ENCODE measurements at regions of chr5 and their contacts with region 1.

Region 1: DNA sequence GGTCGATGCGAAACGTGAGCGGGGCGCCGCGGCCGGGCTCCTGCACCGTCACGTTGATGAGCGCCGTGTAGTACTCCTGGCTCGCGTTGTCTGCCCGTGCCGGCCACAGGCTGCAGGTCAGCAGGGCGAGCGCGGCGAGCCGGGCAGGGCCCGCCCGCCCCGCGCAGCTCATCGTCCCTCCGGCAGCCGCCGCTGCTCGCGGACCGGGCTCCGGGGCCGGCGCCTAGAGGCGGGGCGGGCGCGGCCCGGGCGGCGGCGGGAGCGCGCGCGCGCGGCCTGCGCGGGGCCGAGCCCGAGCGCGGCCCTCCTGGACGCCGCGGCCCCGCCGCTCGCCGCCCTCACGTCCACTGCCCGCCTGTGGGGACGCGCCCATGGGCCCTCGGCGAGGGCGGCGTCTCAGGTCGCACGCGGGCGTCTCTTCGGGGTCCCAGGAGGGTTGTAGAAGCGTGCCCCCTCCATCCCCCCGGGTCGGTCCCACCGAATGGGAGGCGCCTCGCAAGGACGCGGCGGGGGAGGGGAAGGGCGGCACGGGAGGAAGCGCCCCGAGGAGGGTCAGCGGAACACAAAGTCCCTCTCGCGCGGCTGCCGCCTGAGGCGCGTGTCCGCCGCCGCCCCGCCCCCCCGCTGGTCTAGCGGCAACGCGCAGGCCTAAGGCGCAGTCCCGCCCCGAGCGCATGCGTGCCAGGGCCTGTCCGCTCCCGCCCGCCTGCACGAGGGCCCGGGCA is at the start of gene RNF130:
- DNase-seq: peak; percentile 91
- ATAC-seq: peak; percentile 83
- H3K4me3 Mint-ChIP-seq: peak within 1 kb of the TSS; percentile 89
- H3K27ac Mint-ChIP-seq: peak within 1 kb of the TSS; percentile 84
- H3K4me1 Mint-ChIP-seq: peaks cover 28% of the 10 kb centered on the region
- H3K27me3 Mint-ChIP-seq: peaks cover 2% of the 10 kb centered on the region
- CTCF ChIP-seq: no peak
- total RNA-seq, gene RNF130: 17.6 and 18.5 TPM in 2 replicates

Region 2: DNA sequence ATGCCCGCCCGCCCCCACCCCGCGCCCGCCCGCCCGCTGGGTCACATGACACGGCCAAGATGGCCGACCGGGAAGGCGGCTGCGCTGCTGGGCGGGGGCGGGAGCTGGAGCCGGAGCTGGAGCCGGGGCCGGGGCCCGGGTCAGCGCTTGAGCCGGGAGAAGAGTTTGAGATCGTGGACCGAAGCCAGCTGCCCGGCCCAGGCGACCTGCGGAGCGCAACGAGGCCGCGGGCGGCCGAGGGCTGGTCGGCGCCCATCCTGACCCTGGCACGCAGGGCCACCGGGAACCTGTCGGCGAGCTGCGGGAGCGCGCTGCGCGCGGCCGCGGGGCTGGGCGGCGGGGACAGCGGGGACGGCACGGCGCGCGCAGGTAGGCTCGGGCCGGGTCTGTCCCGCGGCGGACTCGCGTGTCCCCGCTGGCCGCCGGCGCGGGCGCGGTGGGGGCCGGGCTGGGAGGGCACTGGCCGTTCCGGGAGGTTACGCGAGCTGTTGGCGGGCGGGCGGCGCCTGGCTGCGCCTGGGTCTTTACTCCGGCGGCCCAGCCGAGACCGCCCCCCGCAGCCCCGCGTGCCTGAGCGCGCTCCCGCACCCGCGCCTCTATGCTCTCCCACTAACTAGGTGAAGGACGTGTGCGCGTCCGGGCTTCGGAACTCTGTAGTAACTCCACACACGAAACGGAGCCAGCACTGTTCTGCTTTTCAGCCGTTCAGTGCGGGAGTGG is 521.0 kb before region 1 on chr5 and contains the start of gene RUFY1:
- CTCF ChIA-PET with region 1: no interaction called
- POLR2A ChIA-PET with region 1: no interaction called
- intact Hi-C with region 1: loop called (anchors 2 kb)
- DNase-seq: peak; percentile 91
- ATAC-seq: peak; percentile 70
- H3K4me3 Mint-ChIP-seq: peak within 1 kb of the TSS; percentile 97
- H3K27ac Mint-ChIP-seq: peak within 1 kb of the TSS; percentile 100
- H3K4me1 Mint-ChIP-seq: peaks cover 60% of the 10 kb centered on the region
- H3K27me3 Mint-ChIP-seq: no peaks in the 10 kb centered on the region
- CTCF ChIP-seq: no peak
- total RNA-seq, gene RUFY1: 83.0 and 95.8 TPM in 2 replicates

Region 3: DNA sequence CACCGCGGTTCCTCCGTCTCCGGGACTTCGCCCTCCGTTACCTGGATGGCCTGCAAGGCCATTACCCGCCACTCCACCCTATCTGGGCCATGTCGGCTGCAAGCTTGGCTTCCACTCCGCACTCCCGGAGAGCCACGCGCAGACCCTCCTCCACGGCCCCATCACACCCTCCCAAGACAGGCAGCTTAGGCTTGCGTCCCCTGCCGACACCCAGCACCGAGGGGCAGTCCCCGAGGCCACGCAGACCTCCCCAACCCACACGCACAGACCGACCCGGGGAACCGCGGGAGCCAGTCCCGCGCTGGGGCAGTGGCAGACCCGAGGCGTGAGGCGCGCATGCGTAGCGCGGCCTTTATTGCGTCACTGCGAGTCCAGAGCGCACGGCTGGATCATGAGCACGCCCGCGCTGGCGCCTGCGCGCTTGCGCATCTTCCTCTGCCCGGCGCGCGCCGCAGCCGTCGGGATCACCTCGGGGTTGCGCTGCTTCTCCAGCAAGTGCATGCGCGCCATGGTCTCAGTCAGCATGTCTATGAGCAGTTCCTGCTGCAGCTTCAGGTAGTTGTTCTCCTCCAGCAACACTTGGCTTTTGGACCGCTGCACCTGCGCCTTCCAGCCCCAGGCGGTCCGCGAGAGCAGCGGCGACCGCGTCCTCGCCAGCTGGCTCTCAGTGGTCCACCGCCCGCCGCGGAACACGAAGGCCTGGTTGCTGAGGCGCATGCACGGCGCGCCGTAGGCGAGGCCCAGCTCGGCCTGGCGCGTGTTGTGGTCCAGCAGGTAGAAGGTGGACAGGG is 393.3 kb before region 1 on chr5:
- CTCF ChIA-PET with region 1: no interaction called
- POLR2A ChIA-PET with region 1: no interaction called
- intact Hi-C with region 1: loop called (anchors 2 kb)
- DNase-seq: peak; percentile 91
- ATAC-seq: peak; percentile 91
- H3K4me3 Mint-ChIP-seq: peak overlapping the region; percentile 96
- H3K27ac Mint-ChIP-seq: peak overlapping the region; percentile 94
- H3K4me1 Mint-ChIP-seq: peaks cover 32% of the 10 kb centered on the region
- H3K27me3 Mint-ChIP-seq: no peaks in the 10 kb centered on the region
- CTCF ChIP-seq: no peak

Region 4: DNA sequence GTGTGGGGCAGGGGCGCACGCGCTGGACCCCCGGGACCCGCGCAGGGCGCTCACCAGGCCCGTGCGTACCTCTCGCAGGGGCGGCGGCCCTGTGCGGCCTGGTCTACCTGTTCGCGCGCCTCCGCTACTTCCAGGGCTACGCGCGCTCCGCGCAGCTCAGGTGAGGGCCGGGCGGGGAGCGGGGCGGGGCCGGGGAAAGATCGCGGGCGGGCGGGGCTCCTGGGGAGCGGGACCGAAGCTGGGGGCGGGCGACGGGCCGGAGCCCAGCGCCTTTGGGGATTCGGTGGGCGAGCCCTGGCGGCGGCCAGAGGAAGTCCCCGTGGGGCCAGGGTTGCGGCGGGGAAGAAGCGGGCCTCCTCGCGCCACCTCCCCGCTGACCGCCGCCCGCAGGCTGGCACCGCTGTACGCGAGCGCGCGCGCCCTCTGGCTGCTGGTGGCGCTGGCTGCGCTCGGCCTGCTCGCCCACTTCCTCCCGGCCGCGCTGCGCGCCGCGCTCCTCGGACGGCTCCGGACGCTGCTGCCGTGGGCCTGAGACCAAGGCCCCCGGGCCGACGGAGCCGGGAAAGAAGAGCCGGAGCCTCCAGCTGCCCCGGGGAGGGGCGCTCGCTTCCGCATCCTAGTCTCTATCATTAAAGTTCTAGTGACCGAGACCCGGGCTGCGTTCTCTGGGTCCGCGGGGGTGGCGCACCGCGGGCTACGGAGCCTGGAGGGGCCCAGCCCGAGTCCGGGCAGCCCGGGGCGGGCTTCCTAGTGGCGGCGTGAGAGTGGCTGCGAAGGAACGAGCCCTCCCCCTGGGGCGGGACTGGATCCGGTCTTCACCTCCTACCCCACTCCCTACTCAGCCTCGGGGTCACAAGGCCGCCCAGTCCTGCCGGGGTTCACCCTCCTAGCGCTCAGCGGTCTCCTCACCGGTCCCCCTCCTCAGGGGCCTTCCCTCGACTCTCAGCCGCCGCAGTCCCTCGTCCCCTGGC is 275.5 kb before region 1 on chr5:
- CTCF ChIA-PET with region 1: no interaction called
- POLR2A ChIA-PET with region 1: no interaction called
- intact Hi-C with region 1: loop called (anchors 5 kb)
- DNase-seq: peak; percentile 78
- ATAC-seq: peak; percentile 78
- H3K4me3 Mint-ChIP-seq: peak overlapping the region; percentile 64
- H3K27ac Mint-ChIP-seq: peak overlapping the region; percentile 7
- H3K4me1 Mint-ChIP-seq: peaks cover 29% of the 10 kb centered on the region
- H3K27me3 Mint-ChIP-seq: no peaks in the 10 kb centered on the region
- CTCF ChIP-seq: peak; percentile 32

Region 5: GRCh38 chr5:179907570-179908324 is 163.9 kb before region 1 on chr5 and contains the start of gene TBC1D9B:
- CTCF ChIA-PET with region 1: no interaction called
- POLR2A ChIA-PET with region 1: no interaction called
- intact Hi-C with region 1: loop called (anchors 2 kb)
- DNase-seq: peak; percentile 74
- ATAC-seq: peak; percentile 90
- H3K4me3 Mint-ChIP-seq: peak within 1 kb of the TSS; percentile 87
- H3K27ac Mint-ChIP-seq: peak within 1 kb of the TSS; percentile 83
- H3K4me1 Mint-ChIP-seq: peaks cover 29% of the 10 kb centered on the region
- H3K27me3 Mint-ChIP-seq: no peaks in the 10 kb centered on the region
- CTCF ChIP-seq: no peak
- total RNA-seq, gene TBC1D9B: 111 and 117 TPM in 2 replicates

Region 6: DNA sequence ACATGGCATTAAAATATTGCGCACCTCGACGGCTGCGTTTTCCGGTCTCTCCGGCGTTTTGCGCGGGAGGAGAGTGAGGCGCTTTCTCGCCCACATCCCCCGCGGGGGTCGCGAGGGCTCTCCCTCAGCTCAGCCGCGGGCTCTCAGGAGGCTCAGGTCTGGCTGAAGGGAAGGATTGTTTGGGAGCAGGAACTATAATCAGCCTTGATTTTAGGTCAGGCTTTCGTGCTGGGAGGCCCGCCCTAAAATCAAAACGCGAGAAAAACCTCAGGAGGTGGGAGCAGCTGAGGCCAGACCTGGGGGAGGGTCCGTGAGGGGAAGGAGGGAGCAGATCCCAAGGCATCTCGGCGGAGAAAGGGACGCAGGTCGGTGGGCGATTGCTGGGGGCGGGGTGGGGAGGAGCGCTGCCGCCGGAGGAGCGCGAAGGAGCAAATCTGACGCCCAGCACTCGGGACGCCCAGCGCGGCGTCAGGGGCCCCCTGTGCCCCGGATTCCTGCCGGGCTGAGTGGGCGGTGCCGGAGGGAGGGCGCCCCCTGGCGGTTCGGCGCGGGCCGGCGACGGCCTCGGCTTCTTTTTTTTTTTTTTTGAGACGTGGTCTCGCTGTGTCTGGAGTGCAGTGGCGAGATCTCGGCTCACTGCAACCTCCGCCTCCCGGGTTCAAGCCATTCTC is 18.5 kb after region 1 on chr5:
- CTCF ChIA-PET with region 1: interaction called, 3 read pairs
- POLR2A ChIA-PET with region 1: no interaction called
- intact Hi-C with region 1: loop called (anchors 1 kb)
- DNase-seq: peak; percentile 85
- ATAC-seq: peak; percentile 91
- H3K4me3 Mint-ChIP-seq: peak overlapping the region; percentile 86
- H3K27ac Mint-ChIP-seq: peak overlapping the region; percentile 56
- H3K4me1 Mint-ChIP-seq: peaks cover 15% of the 10 kb centered on the region
- H3K27me3 Mint-ChIP-seq: peaks cover 8% of the 10 kb centered on the region
- CTCF ChIP-seq: no peak

Region 7: DNA sequence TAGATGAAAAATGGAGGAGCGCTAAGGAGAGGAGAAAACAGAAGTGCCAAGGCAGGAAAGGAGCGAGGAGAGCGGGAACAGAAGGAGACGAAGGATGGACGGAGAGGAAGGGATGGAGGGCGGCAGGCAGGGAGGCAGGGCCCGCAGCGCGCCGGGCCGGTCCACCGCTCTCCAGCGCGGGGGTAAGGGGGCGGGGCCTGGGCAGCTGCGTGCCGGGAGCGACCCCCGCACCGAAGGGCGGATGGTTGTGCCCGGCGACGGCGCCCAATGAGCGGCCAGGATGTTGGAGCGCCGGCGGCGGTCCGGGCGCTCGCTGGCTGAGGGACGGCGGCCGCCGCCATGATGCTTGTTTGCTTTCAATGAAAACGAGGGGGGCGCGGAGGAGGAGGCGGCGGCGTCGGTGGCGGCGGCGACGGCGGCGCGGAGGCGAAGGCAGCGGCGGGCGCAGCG is 422.4 kb after region 1 on chr5 and contains the start of gene CNOT6:
- CTCF ChIA-PET with region 1: no interaction called
- POLR2A ChIA-PET with region 1: no interaction called
- intact Hi-C with region 1: loop called (anchors 5 kb)
- DNase-seq: peak; percentile 95
- ATAC-seq: peak; percentile 92
- H3K4me3 Mint-ChIP-seq: peak within 1 kb of the TSS; percentile 88
- H3K27ac Mint-ChIP-seq: peak within 1 kb of the TSS; percentile 92
- H3K4me1 Mint-ChIP-seq: peaks cover 32% of the 10 kb centered on the region
- H3K27me3 Mint-ChIP-seq: no peaks in the 10 kb centered on the region
- CTCF ChIP-seq: no peak
- total RNA-seq, gene CNOT6: 24.9 and 25.7 TPM in 2 replicates